Activated naive CD4-positive, alpha-beta T cell treated with anti-CD3 and anti-CD28 coated beads for 36 hours (primary cell): ENCODE measurements at regions of chr11 and their contacts with region 1.

Region 1: DNA sequence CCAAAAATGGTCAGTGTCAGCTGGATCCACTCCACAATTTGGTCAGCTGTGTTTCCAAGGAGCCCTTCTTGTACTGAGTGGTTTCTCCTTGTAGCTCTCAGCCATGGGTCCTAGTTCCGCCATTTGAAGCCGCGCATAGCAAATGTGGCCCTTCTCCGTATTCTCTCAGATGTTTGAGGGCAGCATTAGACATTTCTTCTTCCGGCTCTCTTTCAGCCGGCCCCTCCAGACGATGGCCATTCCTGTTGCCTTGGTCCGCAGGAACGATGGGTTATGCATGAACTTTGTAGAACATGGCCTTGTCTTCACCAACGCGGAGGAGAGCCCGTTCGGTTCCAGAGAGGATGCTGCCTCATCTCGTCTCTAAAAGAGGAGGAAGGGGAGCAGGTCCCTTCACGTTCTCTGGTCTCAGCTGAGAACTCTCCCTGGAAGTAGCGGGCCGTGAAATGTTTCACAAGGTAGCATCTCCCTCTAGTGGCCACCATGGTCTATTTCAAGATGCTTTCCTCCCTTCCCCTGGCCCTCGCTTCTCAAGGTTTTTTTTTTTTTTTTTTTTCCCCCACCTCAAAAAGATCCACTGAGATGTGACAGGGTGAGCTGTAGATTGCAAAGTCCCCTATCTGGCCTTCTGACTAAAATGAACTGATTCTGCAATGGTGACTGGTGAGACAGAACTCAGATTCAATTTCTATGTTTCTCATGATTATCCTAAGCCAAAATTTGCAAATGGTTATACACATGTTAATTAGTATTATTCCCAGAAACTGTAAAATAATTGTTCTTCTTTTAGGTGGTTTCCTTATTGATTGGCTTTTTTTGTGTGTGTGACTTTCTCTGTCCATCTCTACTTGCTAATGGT is 19.8 kb upstream of the PLET1 start:
- DNase-seq: peak; percentile 79
- H3K4me3 Mint-ChIP-seq: peak overlapping the region; percentile 76
- H3K27ac Mint-ChIP-seq: no peak overlapping the region
- H3K4me1 Mint-ChIP-seq: peaks cover 2% of the 10 kb centered on the region
- H3K27me3 Mint-ChIP-seq: no peaks in the 10 kb centered on the region

Region 2: DNA sequence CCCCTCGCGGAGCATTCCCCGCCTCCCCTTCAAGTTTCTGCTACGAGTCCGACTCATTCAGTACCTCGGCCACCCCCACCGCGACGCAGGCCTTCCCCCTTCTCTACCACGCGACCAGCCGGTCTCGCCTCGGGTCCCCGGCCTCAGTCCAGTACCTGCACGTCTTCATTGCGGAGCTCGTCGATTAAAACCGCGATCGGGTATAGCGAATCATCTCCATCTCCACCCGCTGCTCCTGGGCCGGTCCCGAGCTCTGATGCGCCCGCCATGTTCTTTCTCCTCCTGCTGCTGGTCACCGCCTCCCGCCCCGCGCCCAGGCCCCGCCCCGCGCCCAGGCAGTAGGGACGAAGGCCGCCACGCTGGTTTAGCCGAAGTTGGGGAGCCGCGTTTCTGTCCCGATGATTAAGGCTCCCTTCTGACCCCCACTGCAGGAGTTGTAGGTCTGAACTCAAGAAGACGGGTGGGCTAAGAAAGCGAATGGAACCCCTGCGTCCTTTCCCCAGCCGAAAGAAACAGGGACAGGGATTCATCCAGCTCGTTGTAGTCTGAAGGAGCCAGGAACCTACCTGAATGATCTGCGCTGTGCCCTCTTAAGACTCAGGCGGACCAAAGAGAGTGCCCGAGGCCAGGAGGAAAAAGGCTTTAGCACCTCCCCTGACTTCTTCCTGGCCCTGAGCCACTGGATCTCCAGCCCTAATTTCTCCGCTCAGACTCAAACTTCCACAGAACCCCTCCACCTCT is 514.2 kb before region 1 on chr11 and contains the start of gene PPP2R1B:
- CTCF ChIA-PET with region 1: interaction called, 4 read pairs
- intact Hi-C with region 1: loop called (anchors 5 kb)
- DNase-seq: peak; percentile 78
- H3K4me3 Mint-ChIP-seq: peak within 1 kb of the TSS; percentile 100
- H3K27ac Mint-ChIP-seq: peak within 1 kb of the TSS; percentile 96
- H3K4me1 Mint-ChIP-seq: peaks cover 33% of the 10 kb centered on the region
- H3K27me3 Mint-ChIP-seq: no peaks in the 10 kb centered on the region
- total RNA-seq, gene PPP2R1B: 36.7 to 43.8 TPM

Region 3: GRCh38 chr11:111878849-111879636 is 401.5 kb before region 1 on chr11 and contains the starts of genes CFAP68 and FDXACB1:
- CTCF ChIA-PET with region 1: interaction called, 4 read pairs
- intact Hi-C with region 1: loop called (anchors 1 kb)
- DNase-seq: peak; percentile 97
- H3K4me3 Mint-ChIP-seq: peak within 1 kb of the TSS; percentile 98
- H3K27ac Mint-ChIP-seq: peak within 1 kb of the TSS; percentile 97
- H3K4me1 Mint-ChIP-seq: peaks cover 39% of the 10 kb centered on the region
- H3K27me3 Mint-ChIP-seq: no peaks in the 10 kb centered on the region
- total RNA-seq, gene CFAP68: 31.5 to 33.2 TPM
- total RNA-seq, gene FDXACB1: 3.4 to 3.8 TPM

Region 4: GRCh38 chr11:112113539-112114457 is 166.7 kb before region 1 on chr11:
- CTCF ChIA-PET with region 1: interaction called, 46 read pairs
- intact Hi-C with region 1: loop called (anchors 1 kb)
- DNase-seq: no peak
- H3K4me3 Mint-ChIP-seq: no peak overlapping the region
- H3K27ac Mint-ChIP-seq: no peak overlapping the region
- H3K4me1 Mint-ChIP-seq: peaks cover 8% of the 10 kb centered on the region
- H3K27me3 Mint-ChIP-seq: no peaks in the 10 kb centered on the region

Region 5: DNA sequence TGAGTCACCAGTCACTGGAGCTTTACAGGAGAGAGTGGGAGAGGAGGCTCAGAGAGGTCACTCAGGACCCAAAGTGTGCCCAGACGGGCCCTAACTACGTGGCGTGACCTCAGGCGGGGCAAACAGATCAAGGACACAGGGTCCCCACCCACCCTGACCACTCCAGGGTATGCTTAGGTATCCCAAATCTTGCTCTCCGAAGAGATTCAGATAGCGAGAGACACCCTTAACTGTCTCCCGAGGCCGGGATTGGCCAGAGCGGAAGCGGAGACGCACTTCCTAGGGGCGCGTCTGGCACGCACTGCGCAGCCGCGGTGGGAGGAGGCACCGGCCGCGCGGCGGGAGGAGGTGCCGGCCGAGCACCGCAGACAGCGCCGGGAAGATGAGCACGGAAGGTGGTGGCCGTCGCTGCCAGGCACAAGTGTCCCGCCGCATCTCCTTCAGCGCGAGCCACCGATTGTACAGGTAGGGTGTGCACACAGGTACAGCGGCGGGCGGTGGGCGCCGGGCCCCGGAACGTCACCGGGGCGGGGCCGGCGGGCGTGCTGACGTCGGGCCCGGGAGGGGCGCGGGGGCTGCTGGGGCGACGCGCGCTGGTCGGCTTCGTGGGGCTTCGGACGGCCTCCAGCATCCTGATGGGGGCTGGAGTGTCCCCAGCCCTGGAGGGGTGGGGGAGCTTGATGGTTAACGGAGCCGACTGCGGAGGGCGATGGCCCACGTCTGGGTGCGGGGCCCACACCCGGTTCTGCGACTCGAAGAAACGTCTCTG is 54.3 kb before region 1 on chr11 and contains the start of gene PTS:
- CTCF ChIA-PET with region 1: interaction called, 212 read pairs
- intact Hi-C with region 1: loop called (anchors 1 kb)
- DNase-seq: peak; percentile 86
- H3K4me3 Mint-ChIP-seq: peak within 1 kb of the TSS; percentile 88
- H3K27ac Mint-ChIP-seq: peak within 1 kb of the TSS; percentile 91
- H3K4me1 Mint-ChIP-seq: peaks cover 17% of the 10 kb centered on the region
- H3K27me3 Mint-ChIP-seq: no peaks in the 10 kb centered on the region
- total RNA-seq, gene PTS: 34.6 to 39.0 TPM